CD8-positive, alpha-beta memory T cell (primary cell): ENCODE measurements at regions of chr3 and their contacts with region 1.

Region 1: DNA sequence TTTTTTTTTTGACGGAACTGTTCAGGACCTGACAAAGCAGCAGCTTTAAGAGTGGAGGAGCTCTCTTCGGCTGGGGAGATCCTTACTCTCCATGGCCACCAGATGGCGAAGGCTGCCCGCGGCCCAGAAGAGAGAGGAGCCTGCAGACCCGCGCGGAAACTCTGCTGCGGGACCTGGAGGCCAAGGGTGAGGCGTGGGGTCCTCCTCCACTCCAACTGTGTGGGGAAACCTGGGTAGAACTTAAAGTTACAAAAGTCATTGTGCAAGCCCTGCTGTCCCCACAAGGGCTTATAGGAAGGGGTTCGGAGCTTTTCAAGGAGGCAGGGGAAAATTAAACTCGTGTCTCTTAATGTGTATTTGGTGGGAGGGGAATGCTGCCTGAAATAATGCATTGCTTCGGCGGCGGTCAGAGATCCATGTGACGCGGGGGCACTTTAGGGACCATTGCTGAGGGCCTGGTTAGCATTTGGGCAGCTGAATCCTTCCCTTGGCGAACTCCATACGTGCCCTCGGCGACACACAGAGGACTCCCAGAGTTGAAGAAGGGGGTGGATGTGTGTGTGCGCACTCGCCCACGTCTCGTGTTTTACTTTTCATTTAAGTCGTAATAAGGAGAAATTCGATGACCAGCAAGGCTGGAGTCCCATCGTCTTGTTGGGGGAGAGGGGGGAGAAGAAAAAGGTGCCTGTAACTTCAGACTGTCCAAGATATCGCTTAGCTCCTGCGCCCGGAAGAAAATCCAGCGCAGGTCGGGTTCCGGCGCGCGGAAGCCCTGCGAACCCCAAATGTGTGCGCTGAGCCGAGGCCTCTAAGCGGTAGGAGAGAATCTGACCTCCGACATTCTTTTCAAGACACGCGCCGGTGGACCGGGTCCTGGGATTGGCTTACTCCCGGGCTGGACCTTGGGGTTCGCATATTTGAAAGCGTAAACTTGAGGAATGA is 9.7 kb downstream of the EOMES start:
- DNase-seq: peak; percentile 71 to 88 (median 75)
- H3K4me3 ChIP-seq: peak overlapping the region; percentile 84
- H3K4me3 Mint-ChIP-seq: peak overlapping the region; percentile 95 to 100 (median 99)
- H3K27ac ChIP-seq: peak overlapping the region; percentile 72
- H3K27ac Mint-ChIP-seq: peak overlapping the region; percentile 85 to 99 (median 96)
- H3K4me1 ChIP-seq: peaks cover 17% of the 10 kb centered on the region
- H3K4me1 Mint-ChIP-seq: peaks cover 30 to 49% (median 37%) of the 10 kb centered on the region in 3 donors
- H3K27me3 ChIP-seq: no peaks in the 10 kb centered on the region
- H3K27me3 Mint-ChIP-seq: peaks cover 5 to 10% of the 10 kb centered on the region in 2 donors

Region 2: GRCh38 chr3:27659279-27660021 is 53.0 kb before region 1 on chr3:
- CTCF ChIA-PET with region 1: no interaction called
- POLR2A ChIA-PET with region 1: no interaction called
- DNase-seq: peak; percentile 20 to 68 (median 27)
- H3K4me3 ChIP-seq: no peak overlapping the region
- H3K4me3 Mint-ChIP-seq: no peak overlapping the region
- H3K27ac ChIP-seq: no peak overlapping the region
- H3K27ac Mint-ChIP-seq: peak overlapping the region in 1 of 8 donors; percentile 8
- H3K4me1 ChIP-seq: no peaks in the 10 kb centered on the region
- H3K4me1 Mint-ChIP-seq: peaks cover 0 to 13% (median 3%) of the 10 kb centered on the region in 3 donors
- H3K27me3 ChIP-seq: no peaks in the 10 kb centered on the region
- H3K27me3 Mint-ChIP-seq: peaks cover 5 to 7% of the 10 kb centered on the region in 2 donors

Region 3: GRCh38 chr3:27699067-27699466 is 13.3 kb before region 1 on chr3:
- CTCF ChIA-PET with region 1: interaction called, 11 read pairs
- POLR2A ChIA-PET with region 1: no interaction called
- DNase-seq: no peak
- H3K4me3 ChIP-seq: no peak overlapping the region
- H3K4me3 Mint-ChIP-seq: no peak overlapping the region
- H3K27ac ChIP-seq: no peak overlapping the region
- H3K27ac Mint-ChIP-seq: no peak overlapping the region
- H3K4me1 ChIP-seq: no peaks in the 10 kb centered on the region
- H3K4me1 Mint-ChIP-seq: no peaks in the 10 kb centered on the region
- H3K27me3 ChIP-seq: no peaks in the 10 kb centered on the region
- H3K27me3 Mint-ChIP-seq: no peaks in the 10 kb centered on the region

Region 4: DNA sequence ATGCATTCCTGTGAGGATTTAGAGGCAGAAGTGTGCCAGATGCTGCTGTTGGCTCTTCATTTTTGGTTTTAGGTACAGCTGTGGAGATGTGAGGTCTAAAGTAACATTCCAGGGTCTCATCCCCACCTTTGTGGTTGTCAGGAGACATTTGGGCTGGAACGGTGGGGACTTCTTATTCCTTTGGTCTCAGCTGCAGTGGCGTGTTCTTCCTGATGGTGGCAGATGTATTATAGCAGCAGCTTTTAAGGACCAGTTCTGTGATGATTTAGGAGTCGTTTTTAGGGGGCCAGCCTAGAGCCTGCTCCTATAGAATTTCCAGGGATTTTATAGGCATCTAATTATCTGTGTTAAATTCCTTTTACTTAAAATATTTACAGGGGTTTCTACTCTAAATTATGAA is 230.7 kb after region 1 on chr3:
- CTCF ChIA-PET with region 1: no interaction called
- POLR2A ChIA-PET with region 1: no interaction called
- DNase-seq: peak in 1 of 5 donors; percentile 1
- H3K4me3 ChIP-seq: no peak overlapping the region
- H3K4me3 Mint-ChIP-seq: no peak overlapping the region
- H3K27ac ChIP-seq: no peak overlapping the region
- H3K27ac Mint-ChIP-seq: no peak overlapping the region
- H3K4me1 ChIP-seq: no peaks in the 10 kb centered on the region
- H3K4me1 Mint-ChIP-seq: peaks cover 8 to 28% (median 17%) of the 10 kb centered on the region in 3 donors
- H3K27me3 ChIP-seq: no peaks in the 10 kb centered on the region
- H3K27me3 Mint-ChIP-seq: no peaks in the 10 kb centered on the region

Region 5: GRCh38 chr3:28218071-28218916 is 505.9 kb after region 1 on chr3:
- CTCF ChIA-PET with region 1: interaction called, 3 read pairs
- POLR2A ChIA-PET with region 1: interaction called, 18 read pairs
- DNase-seq: no peak
- H3K4me3 ChIP-seq: no peak overlapping the region
- H3K4me3 Mint-ChIP-seq: peak overlapping the region in 4 of 7 donors; percentile 14 to 49 (median 46)
- H3K27ac ChIP-seq: no peak overlapping the region
- H3K27ac Mint-ChIP-seq: peak overlapping the region in 3 of 8 donors; percentile 10 to 27 (median 18)
- H3K4me1 ChIP-seq: no peaks in the 10 kb centered on the region
- H3K4me1 Mint-ChIP-seq: peaks cover 35 to 47% (median 44%) of the 10 kb centered on the region in 3 donors
- H3K27me3 ChIP-seq: no peaks in the 10 kb centered on the region
- H3K27me3 Mint-ChIP-seq: no peaks in the 10 kb centered on the region

Region 6: GRCh38 chr3:28286595-28286994 is 574.2 kb after region 1 on chr3:
- CTCF ChIA-PET with region 1: interaction called, 20 read pairs
- POLR2A ChIA-PET with region 1: interaction called, 4 read pairs
- DNase-seq: peak in 2 of 5 donors; percentile 26 to 27
- H3K4me3 ChIP-seq: no peak overlapping the region
- H3K4me3 Mint-ChIP-seq: peak overlapping the region in 3 of 7 donors; percentile 44 to 79 (median 58)
- H3K27ac ChIP-seq: no peak overlapping the region
- H3K27ac Mint-ChIP-seq: peak overlapping the region in 7 of 8 donors; percentile 10 to 88 (median 62)
- H3K4me1 ChIP-seq: no peaks in the 10 kb centered on the region
- H3K4me1 Mint-ChIP-seq: peaks cover 57 to 73% (median 69%) of the 10 kb centered on the region in 3 donors
- H3K27me3 ChIP-seq: no peaks in the 10 kb centered on the region
- H3K27me3 Mint-ChIP-seq: no peaks in the 10 kb centered on the region

Region 7: GRCh38 chr3:28317438-28318022 is 605.1 kb after region 1 on chr3:
- CTCF ChIA-PET with region 1: interaction called, 20 read pairs
- POLR2A ChIA-PET with region 1: interaction called, 8 read pairs
- DNase-seq: peak; percentile 10 to 54 (median 31)
- H3K4me3 ChIP-seq: no peak overlapping the region
- H3K4me3 Mint-ChIP-seq: peak overlapping the region in 1 of 7 donors; percentile 41
- H3K27ac ChIP-seq: no peak overlapping the region
- H3K27ac Mint-ChIP-seq: peak overlapping the region in 3 of 8 donors; percentile 22 to 66 (median 23)
- H3K4me1 ChIP-seq: peaks cover 5% of the 10 kb centered on the region
- H3K4me1 Mint-ChIP-seq: peaks cover 31 to 78% (median 62%) of the 10 kb centered on the region in 3 donors
- H3K27me3 ChIP-seq: no peaks in the 10 kb centered on the region
- H3K27me3 Mint-ChIP-seq: no peaks in the 10 kb centered on the region

Region 8: GRCh38 chr3:28348629-28349483 is 636.4 kb after region 1 on chr3 and contains the starts of genes AZI2 and ZCWPW2:
- CTCF ChIA-PET with region 1: interaction called, 26 read pairs
- POLR2A ChIA-PET with region 1: interaction called, 14 read pairs
- DNase-seq: peak; percentile 87 to 95 (median 90)
- H3K4me3 ChIP-seq: peak within 1 kb of the TSS; percentile 92
- H3K4me3 Mint-ChIP-seq: peak within 1 kb of the TSS; percentile 96 to 100 (median 98)
- H3K27ac ChIP-seq: peak within 1 kb of the TSS; percentile 97
- H3K27ac Mint-ChIP-seq: peak within 1 kb of the TSS; percentile 95 to 100 (median 99)
- H3K4me1 ChIP-seq: peaks cover 34% of the 10 kb centered on the region
- H3K4me1 Mint-ChIP-seq: peaks cover 55 to 74% (median 68%) of the 10 kb centered on the region in 3 donors
- H3K27me3 ChIP-seq: no peaks in the 10 kb centered on the region
- H3K27me3 Mint-ChIP-seq: no peaks in the 10 kb centered on the region
- total RNA-seq, gene AZI2: 34.5 to 36.4 TPM
- total RNA-seq, gene ZCWPW2: 0.20 to 0.27 TPM